MCF 10A (cell line): ENCODE measurements at regions of chr6 and their contacts with region 1.

Region 1: DNA sequence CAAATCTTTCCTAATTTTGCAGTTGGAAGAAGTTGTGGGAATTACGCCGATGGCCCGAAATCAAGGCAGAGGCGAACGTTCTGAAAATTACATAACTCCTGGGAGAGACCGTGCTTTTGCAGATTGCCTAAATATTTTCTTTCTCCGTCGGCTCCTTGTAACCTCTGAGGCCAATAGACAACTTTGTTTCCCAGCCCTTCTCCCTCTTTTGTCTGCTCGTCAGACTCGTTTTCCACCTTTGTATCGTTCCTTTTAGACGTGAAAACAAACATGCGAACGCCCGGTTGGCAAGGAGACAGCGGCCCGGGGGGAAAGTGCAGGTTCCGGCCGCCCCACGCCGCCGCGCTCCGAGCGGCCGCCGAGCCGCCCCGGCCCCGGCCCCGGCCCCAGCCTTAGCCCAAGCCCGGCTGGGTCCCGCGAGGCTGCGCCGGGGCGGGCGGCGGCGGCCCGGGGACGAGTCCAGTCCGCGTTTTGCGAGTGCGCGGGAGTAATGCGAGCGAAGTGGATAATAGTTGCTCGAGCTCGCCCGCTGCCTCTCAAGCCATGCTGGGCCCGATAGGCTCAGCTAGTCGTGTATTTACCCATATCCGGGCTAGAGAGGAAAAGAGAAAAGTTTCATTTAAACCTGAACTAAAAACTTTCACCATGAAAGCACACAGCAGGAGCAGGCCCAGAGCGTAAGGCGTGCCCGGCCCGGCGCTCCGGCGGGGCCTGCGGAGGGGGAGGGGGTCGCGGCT is at the start of gene ARID1B:
- DNase-seq: peak; percentile 79
- H3K4me3 Mint-ChIP-seq: peak within 1 kb of the TSS; percentile 79
- H3K27ac Mint-ChIP-seq: peak within 1 kb of the TSS; percentile 94
- H3K4me1 Mint-ChIP-seq: peaks cover 19% of the 10 kb centered on the region
- H3K27me3 Mint-ChIP-seq: no peaks in the 10 kb centered on the region
- CTCF ChIP-seq: no peak
- total RNA-seq, gene ARID1B: 62.2 and 63.9 TPM in 2 replicates

Region 2: DNA sequence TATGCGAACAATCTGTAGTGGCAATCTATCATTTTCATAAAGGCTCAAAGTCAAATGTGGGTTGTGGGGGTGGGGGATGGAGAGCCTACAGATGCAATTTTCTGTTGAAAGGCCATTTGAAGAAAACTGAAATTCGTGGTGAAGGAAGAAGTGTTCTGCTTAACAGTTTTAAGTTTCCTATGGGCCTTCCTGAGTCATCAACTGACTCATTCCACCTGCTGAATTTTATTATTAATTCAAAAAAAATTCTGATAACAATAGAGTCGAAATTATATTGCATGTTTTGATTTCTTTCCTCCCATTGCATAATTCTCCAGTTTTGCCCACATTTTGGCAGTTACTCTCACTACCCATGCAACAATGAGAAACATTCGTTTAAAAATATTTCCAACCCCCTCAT is 622.1 kb before region 1 on chr6:
- CTCF ChIA-PET with region 1: no interaction called
- POLR2A ChIA-PET with region 1: no interaction called
- intact Hi-C with region 1: loop called (anchors 2 kb)
- DNase-seq: peak; percentile 54
- H3K4me3 Mint-ChIP-seq: no peak overlapping the region
- H3K27ac Mint-ChIP-seq: no peak overlapping the region
- H3K4me1 Mint-ChIP-seq: peaks cover 23% of the 10 kb centered on the region
- H3K27me3 Mint-ChIP-seq: no peaks in the 10 kb centered on the region
- CTCF ChIP-seq: no peak

Region 3: DNA sequence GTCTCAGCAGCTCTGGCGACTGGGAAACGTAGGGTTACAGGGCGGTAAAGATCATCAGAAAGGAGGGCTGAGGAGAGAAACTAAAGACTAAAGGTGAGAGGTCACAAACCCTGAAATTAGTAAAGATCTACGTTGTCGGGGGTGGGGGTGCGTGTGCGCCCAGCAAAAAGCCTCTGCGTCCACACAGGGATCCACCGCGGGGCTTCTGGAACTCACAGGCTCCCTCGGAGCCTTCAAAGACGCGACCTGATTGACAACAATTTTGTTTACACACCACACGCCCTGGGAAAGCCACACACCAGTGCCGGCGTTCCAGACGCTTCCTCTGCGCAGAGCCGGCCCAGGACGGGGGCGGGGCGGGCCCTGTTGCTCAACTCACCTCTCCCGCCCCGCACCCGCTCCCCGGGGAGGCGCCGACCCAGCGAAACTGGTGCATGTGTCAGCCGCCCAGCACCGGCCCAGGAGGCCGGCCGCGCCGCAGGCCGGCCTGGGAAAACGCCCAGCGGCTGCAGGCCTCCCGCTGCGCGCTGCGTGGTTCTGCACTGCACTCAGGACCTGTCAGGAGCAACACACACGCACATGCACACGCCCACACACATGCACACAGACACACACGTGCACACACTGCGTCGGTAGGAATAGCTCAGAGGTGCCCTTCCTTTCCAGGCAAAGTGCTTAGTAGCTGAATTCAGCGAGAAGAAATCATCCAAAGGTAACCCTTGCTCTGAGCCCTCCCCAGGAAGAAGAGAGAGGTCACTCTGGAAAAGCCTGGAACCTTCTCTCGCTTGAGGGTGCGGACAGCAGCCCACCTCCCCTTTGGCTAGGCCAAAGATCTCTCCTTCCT is 57.1 kb before region 1 on chr6:
- CTCF ChIA-PET with region 1: interaction called, 7 read pairs
- POLR2A ChIA-PET with region 1: interaction called, 196 read pairs
- intact Hi-C with region 1: loop called (anchors 1 kb)
- DNase-seq: peak; percentile 97
- H3K4me3 Mint-ChIP-seq: peak overlapping the region; percentile 68
- H3K27ac Mint-ChIP-seq: peak overlapping the region; percentile 97
- H3K4me1 Mint-ChIP-seq: peaks cover 22% of the 10 kb centered on the region
- H3K27me3 Mint-ChIP-seq: no peaks in the 10 kb centered on the region
- CTCF ChIP-seq: no peak

Region 4: GRCh38 chr6:156866220-156867015 is 89.4 kb after region 1 on chr6:
- CTCF ChIA-PET with region 1: no interaction called
- POLR2A ChIA-PET with region 1: interaction called, 6 read pairs
- intact Hi-C with region 1: loop called (anchors 5 kb)
- DNase-seq: peak; percentile 68
- H3K4me3 Mint-ChIP-seq: no peak overlapping the region
- H3K27ac Mint-ChIP-seq: peak overlapping the region; percentile 18
- H3K4me1 Mint-ChIP-seq: peaks cover 38% of the 10 kb centered on the region
- H3K27me3 Mint-ChIP-seq: no peaks in the 10 kb centered on the region
- CTCF ChIP-seq: no peak

Region 5: GRCh38 chr6:157021344-157021992 is 244.5 kb after region 1 on chr6:
- CTCF ChIA-PET with region 1: interaction called, 4 read pairs
- POLR2A ChIA-PET with region 1: interaction called, 82 read pairs
- intact Hi-C with region 1: loop called (anchors 1 kb)
- DNase-seq: peak; percentile 88
- H3K4me3 Mint-ChIP-seq: peak overlapping the region; percentile 90
- H3K27ac Mint-ChIP-seq: peak overlapping the region; percentile 99
- H3K4me1 Mint-ChIP-seq: peaks cover 10% of the 10 kb centered on the region
- H3K27me3 Mint-ChIP-seq: no peaks in the 10 kb centered on the region
- CTCF ChIP-seq: peak; percentile 46

Region 6: GRCh38 chr6:157274471-157275226 is 497.6 kb after region 1 on chr6:
- CTCF ChIA-PET with region 1: no interaction called
- POLR2A ChIA-PET with region 1: no interaction called
- intact Hi-C with region 1: loop called (anchors 5 kb)
- DNase-seq: peak; percentile 68
- H3K4me3 Mint-ChIP-seq: peak overlapping the region; percentile 73
- H3K27ac Mint-ChIP-seq: no peak overlapping the region
- H3K4me1 Mint-ChIP-seq: no peaks in the 10 kb centered on the region
- H3K27me3 Mint-ChIP-seq: no peaks in the 10 kb centered on the region
- CTCF ChIP-seq: peak; percentile 49